GM12878 (cell line): ENCODE measurements at regions of chr19 and their contacts with region 1.

Region 1: GRCh38 chr19:16714702-16715287 is 4.9 kb upstream of the NWD1 start:
- DNase-seq: peak; percentile 20
- ATAC-seq: peak; percentile 42
- H3K4me3 ChIP-seq: no peak overlapping the region
- H3K27ac ChIP-seq: no peak overlapping the region
- H3K4me1 ChIP-seq: peaks cover 18% of the 10 kb centered on the region
- H3K27me3 ChIP-seq: no peaks in the 10 kb centered on the region
- CTCF ChIP-seq: peak; percentile 84 to 91 (median 86)
- EP300 ChIP-seq: no peak
- POLR2A ChIP-seq: no peak
- RAD21 ChIP-seq: peak; percentile 91

Region 2: GRCh38 chr19:16703677-16704076 is 11.1 kb before region 1 on chr19:
- CTCF ChIA-PET with region 1: interaction called, 13 read pairs
- POLR2A ChIA-PET with region 1: interaction called, 3 read pairs
- RAD21 ChIA-PET with region 1: interaction called, 3 read pairs
- SMC1A ChIA-PET with region 1: interaction called, 5 read pairs
- in situ Hi-C with region 1: no loop called
- intact Hi-C with region 1: no loop called
- DNase-seq: no peak
- ATAC-seq: no peak
- H3K4me3 ChIP-seq: no peak overlapping the region
- H3K27ac ChIP-seq: no peak overlapping the region
- H3K4me1 ChIP-seq: no peaks in the 10 kb centered on the region
- H3K27me3 ChIP-seq: no peaks in the 10 kb centered on the region
- CTCF ChIP-seq: no peak
- EP300 ChIP-seq: no peak
- POLR2A ChIP-seq: no peak
- RAD21 ChIP-seq: no peak

Region 3: GRCh38 chr19:16778796-16779411 is 64.1 kb after region 1 on chr19:
- CTCF ChIA-PET with region 1: interaction called, 5 read pairs
- POLR2A ChIA-PET with region 1: interaction called, 3 read pairs
- RAD21 ChIA-PET with region 1: interaction called, 7 read pairs
- SMC1A ChIA-PET with region 1: interaction called, 14 read pairs
- in situ Hi-C with region 1: no loop called
- intact Hi-C with region 1: no loop called
- DNase-seq: peak; percentile 26
- ATAC-seq: peak; percentile 86
- H3K4me3 ChIP-seq: no peak overlapping the region
- H3K27ac ChIP-seq: no peak overlapping the region
- H3K4me1 ChIP-seq: no peaks in the 10 kb centered on the region
- H3K27me3 ChIP-seq: no peaks in the 10 kb centered on the region
- CTCF ChIP-seq: peak; percentile 71 to 75 (median 74)
- EP300 ChIP-seq: no peak
- POLR2A ChIP-seq: no peak
- RAD21 ChIP-seq: peak; percentile 83

Region 4: DNA sequence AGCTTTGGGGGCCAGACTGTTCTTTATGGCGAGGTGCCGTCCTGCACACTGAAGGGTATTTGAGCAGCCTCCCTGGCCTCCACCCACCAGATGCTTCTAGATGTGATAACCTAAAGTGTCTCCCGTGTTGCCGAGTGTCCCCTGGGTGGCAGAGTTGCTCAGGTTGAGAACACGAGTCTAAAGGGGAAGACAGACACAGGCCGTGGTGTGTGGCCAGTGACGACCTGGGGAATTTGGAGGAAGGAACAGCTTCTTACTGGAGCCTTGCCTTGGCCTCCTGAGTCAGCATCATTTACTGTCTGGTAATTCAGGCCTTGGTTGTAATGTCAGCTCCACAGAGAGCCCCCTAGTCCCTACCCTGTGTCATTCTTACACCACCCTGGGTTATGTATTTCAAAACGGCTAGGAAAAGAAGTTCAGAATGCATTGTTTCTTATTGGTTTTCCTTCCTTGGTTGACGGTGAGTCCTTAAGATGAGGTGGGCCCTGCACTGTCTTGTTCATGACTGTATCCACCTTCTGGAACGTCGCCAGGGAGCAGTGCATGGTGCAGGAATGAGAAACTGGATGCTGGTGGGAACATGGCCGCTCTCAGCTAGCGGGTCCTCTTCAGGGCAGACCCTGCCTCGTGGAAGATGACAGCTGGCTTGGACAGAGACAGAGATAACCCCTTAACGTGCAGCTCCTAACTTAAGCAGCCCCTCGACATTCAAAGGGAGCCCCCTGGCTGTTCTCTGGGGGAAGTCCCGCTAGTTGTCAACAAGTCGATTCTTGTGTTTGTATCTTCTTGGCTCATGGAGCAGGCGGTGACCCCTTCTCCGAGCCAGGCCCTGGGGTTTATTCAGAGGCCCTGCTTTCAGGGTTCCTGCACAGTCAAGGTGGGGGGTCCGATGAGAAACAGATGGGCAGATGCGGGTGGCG is 121.6 kb after region 1 on chr19:
- CTCF ChIA-PET with region 1: interaction called, 16 read pairs
- POLR2A ChIA-PET with region 1: no interaction called
- RAD21 ChIA-PET with region 1: no interaction called
- SMC1A ChIA-PET with region 1: no interaction called
- in situ Hi-C with region 1: no loop called
- intact Hi-C with region 1: loop called (anchors 10 kb)
- DNase-seq: peak; percentile 46
- ATAC-seq: peak; percentile 95
- H3K4me3 ChIP-seq: no peak overlapping the region
- H3K27ac ChIP-seq: peak overlapping the region; percentile 49
- H3K4me1 ChIP-seq: peaks cover 27% of the 10 kb centered on the region
- H3K27me3 ChIP-seq: no peaks in the 10 kb centered on the region
- CTCF ChIP-seq: peak; percentile 51 to 85 (median 61)
- EP300 ChIP-seq: no peak; a peak in 1 of 4 replicates
- POLR2A ChIP-seq: peak; percentile 49
- RAD21 ChIP-seq: peak; percentile 69

Region 5: DNA sequence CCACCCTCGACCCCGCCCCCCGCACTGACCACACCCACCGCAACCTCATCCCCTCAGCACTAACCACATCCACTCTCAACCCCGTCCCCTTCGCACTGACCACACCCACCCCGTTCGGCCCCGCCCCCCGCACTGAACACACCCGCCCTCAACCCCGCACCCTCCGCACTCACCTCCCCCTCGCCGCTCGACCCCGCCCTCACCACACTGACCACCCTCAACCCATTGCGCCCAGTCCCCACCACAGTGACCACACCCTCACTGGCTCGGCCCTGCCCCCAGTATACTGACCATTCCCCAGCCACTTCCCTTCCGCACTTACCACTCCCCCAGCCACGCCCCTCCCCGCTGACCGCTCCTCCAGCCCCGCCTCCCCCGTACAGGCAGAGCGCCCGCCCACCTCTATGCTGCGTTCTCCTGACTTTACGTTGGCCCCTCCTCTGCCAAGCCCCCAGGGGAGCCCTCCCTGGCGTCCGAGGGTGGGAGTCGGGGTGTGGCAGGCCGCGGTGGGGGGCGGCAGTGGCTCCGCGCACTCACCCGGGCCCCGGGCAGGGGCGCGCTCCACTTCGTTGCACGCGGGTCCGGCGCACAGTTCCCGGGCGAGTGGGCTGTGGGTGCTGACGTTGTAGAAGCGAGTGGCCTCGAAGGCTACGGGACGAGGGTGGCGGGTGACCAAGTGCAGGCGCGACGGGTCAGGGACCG is 182.5 kb after region 1 on chr19:
- CTCF ChIA-PET with region 1: interaction called, 7 read pairs
- POLR2A ChIA-PET with region 1: no interaction called
- RAD21 ChIA-PET with region 1: interaction called, 8 read pairs
- SMC1A ChIA-PET with region 1: interaction called, 6 read pairs
- in situ Hi-C with region 1: no loop called
- intact Hi-C with region 1: loop called (anchors 2 kb)
- DNase-seq: peak; percentile 60
- ATAC-seq: peak; percentile 85
- H3K4me3 ChIP-seq: peak overlapping the region; percentile 90
- H3K27ac ChIP-seq: peak overlapping the region; percentile 7; the same call in 1 of the 2 replicates
- H3K4me1 ChIP-seq: peaks cover 44% of the 10 kb centered on the region
- H3K27me3 ChIP-seq: no peaks in the 10 kb centered on the region
- CTCF ChIP-seq: no peak
- EP300 ChIP-seq: no peak
- POLR2A ChIP-seq: peak; percentile 28; the same call in 1 of the 2 replicates
- RAD21 ChIP-seq: no peak

Region 6: GRCh38 chr19:16969127-16969526 is 254.3 kb after region 1 on chr19:
- CTCF ChIA-PET with region 1: interaction called, 3 read pairs
- POLR2A ChIA-PET with region 1: no interaction called
- RAD21 ChIA-PET with region 1: no interaction called
- SMC1A ChIA-PET with region 1: no interaction called
- in situ Hi-C with region 1: no loop called
- intact Hi-C with region 1: loop called (anchors 2 kb)
- DNase-seq: no peak
- ATAC-seq: peak; percentile 63
- H3K4me3 ChIP-seq: no peak overlapping the region
- H3K27ac ChIP-seq: no peak overlapping the region
- H3K4me1 ChIP-seq: no peaks in the 10 kb centered on the region
- H3K27me3 ChIP-seq: no peaks in the 10 kb centered on the region
- CTCF ChIP-seq: peak; percentile 20 to 24 (median 23); a peak in 2 of 6 replicates
- EP300 ChIP-seq: no peak
- POLR2A ChIP-seq: no peak
- RAD21 ChIP-seq: 0 out of 2 replicates have a peak, but pooled peaks have one; percentile 28

Region 7: DNA sequence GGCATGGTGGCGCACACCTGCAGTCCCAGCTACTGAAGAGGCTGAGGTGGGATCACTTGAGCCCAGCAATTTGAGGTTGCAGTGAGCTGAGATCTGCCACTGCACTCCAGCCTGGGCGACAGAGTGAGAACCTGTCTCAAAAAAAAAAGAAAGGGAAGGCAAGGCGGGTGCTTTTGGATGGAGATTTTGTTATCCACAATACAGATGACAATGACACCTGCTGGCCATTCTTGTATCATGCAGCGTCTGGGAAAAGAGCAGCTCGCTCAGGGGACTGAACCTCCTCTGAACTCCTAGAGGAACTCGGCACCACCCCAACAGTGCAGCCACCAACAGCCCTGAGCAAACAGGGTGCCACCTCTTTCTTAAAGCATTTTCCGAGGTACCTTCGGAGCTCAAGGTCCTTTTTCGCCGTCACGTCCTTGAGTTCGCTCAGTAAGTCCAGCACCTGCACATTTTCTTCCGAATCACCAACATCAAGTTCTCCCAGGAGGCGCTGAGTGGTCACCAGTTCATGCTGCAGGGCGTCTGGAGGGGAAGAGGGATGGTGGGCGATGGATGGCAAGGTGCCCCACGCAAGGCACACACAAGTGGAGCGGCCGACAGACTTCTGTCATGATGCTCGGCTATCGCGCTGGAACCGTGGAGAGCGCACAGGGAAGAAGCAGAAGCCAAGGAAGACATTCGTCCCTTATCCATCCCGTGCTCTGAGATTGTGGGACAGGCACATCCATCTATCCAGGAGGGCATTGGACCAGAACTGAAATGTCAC is 337.8 kb after region 1 on chr19:
- CTCF ChIA-PET with region 1: interaction called, 17 read pairs
- POLR2A ChIA-PET with region 1: no interaction called
- RAD21 ChIA-PET with region 1: interaction called, 4 read pairs
- SMC1A ChIA-PET with region 1: interaction called, 6 read pairs
- in situ Hi-C with region 1: no loop called
- intact Hi-C with region 1: loop called (anchors 2 kb)
- DNase-seq: no peak
- ATAC-seq: peak; percentile 59; the same call in 2 of the 3 replicates
- H3K4me3 ChIP-seq: no peak overlapping the region
- H3K27ac ChIP-seq: no peak overlapping the region
- H3K4me1 ChIP-seq: no peaks in the 10 kb centered on the region
- H3K27me3 ChIP-seq: no peaks in the 10 kb centered on the region
- CTCF ChIP-seq: peak; percentile 40 to 52 (median 40); a peak in 5 of 6 replicates
- EP300 ChIP-seq: no peak
- POLR2A ChIP-seq: no peak
- RAD21 ChIP-seq: peak; percentile 47